Esophagus squamous epithelium (tissue), 5 donors: ENCODE measurements at regions of chr2 and their contacts with region 1.

Region 1: GRCh38 chr2:75403991-75404428 is 156.7 kb downstream of the EVA1A start:
- DNase-seq: no peak
- H3K4me3 ChIP-seq: no peak overlapping the region
- H3K27ac ChIP-seq: no peak overlapping the region
- H3K4me1 ChIP-seq: no peaks in the 10 kb centered on the region
- H3K27me3 ChIP-seq: peaks cover 0 to 30% (median 0%) of the 10 kb centered on the region in 4 donors
- CTCF ChIP-seq: peak in 5 of 6 experiments; percentile 53 to 74 (median 60)
- POLR2A ChIP-seq: no peak

Region 2: DNA sequence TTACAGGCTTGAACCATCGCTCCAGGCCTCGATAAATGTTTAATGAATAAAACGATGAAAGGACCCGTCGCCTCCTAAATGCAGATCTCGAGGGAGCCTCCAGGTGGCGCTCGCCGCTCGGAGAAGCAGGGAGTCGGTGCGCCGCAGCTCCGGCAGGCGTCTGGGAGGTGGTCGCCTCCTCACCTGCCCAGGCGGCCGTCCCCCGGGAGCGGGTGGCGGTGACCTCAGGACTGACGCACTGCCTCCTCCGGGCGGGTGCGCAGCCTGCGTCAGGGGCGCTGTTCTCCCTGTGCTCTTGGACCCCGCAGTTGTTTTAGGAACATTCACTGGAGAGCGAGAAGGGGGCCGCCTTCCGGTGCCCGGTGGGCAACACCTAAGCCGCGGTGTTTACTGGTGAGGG is 484.2 kb before region 1 on chr2:
- intact Hi-C with region 1: loop called (anchors 10 kb)
- DNase-seq: no peak
- H3K4me3 ChIP-seq: peak overlapping the region in 3 of 4 donors; percentile 23 to 52 (median 31)
- H3K27ac ChIP-seq: no peak overlapping the region
- H3K4me1 ChIP-seq: peaks cover 0 to 9% (median 0%) of the 10 kb centered on the region in 3 donors
- H3K27me3 ChIP-seq: peaks cover 0 to 41% (median 0%) of the 10 kb centered on the region in 4 donors
- CTCF ChIP-seq: peak; percentile 69 to 84 (median 82)
- POLR2A ChIP-seq: no peak

Region 3: DNA sequence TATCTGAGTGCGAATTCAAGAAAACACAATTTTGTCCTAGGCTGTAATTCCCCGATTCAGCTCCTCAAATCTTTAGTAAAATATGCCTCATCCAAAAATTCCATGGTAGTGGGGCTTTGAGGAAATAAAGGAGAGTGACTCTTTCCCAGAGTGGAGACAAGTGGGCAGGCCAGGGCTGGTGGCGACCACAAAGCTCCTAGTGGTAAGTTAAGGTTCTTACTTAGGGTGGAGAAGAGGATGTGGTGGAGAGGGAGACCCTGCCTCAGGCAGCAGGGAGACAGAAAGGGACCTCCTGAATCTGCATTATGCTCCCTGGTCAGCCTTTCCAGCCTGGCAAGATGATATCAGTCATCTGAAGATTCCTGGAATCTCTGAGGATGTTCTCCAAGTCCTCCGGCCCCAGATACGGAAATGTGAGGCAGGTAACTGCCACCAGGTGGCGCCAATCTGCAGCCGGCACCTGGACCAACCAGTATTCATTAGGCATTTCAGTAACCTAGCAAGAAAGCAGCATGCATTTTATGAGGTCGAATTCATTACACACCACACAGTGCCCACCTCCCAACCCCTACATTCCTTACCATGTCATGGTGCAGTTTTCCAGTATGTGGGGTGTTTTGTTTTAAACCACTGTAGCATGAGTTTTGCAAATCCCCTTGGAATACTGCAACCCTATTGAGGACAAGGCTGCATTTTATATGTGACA is 339.2 kb before region 1 on chr2:
- intact Hi-C with region 1: loop called (anchors 10 kb)
- DNase-seq: no peak
- H3K4me3 ChIP-seq: no peak overlapping the region
- H3K27ac ChIP-seq: no peak overlapping the region
- H3K4me1 ChIP-seq: no peaks in the 10 kb centered on the region
- H3K27me3 ChIP-seq: no peaks in the 10 kb centered on the region
- CTCF ChIP-seq: peak; percentile 55 to 79 (median 67)
- POLR2A ChIP-seq: no peak

Region 4: DNA sequence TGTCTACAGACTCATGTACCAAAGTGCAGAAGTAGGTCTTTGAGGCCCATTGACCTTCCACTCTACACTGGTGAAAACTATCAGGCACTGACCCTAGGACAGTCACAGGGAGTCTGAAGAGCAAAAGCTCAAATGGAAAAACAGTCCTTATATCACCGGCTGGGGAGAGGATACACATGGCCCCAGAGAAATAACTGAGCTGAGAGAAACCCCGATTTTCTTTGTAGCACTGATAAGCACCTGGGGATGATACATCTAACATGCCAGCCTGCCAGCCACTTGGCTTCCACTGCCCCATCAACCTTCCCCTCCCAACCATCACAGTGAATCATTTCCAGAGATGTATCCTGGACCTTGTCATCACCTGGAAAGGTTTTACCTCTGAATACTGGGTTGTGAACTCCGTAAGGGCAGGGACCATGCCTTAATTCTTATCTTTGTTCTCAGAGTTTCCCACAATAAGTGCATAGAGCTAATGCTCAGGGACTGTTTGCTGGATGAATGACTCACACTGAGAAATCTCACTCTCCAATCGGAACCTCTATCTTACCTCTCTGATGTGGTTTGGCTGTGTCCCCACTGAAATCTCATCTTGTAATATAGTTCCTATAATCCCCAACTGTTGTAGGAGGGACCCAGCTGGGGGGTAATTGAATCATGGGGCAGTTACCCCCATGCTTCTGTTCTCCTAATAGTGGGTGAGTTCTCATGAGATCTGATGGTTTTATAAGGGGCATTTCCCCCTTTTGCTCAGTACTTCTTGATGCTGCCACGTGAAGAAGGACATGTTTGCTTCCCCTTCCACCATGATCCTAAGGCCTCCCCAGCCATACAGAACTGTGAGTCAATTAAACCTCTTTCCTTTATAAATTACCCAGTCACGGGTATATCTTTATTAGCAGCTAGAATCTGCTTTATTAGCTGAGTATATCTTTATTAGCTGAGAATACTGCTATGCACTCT is 119.6 kb after region 1 on chr2:
- intact Hi-C with region 1: no loop called
- DNase-seq: no peak
- H3K4me3 ChIP-seq: no peak overlapping the region
- H3K27ac ChIP-seq: no peak overlapping the region
- H3K4me1 ChIP-seq: peaks cover 0 to 6% (median 0%) of the 10 kb centered on the region in 3 donors
- H3K27me3 ChIP-seq: no peaks in the 10 kb centered on the region
- CTCF ChIP-seq: no peak
- POLR2A ChIP-seq: no peak